PC-3 (cell line): ENCODE measurements at regions of chr6 and their contacts with region 1.

Region 1: GRCh38 chr6:42118162-42119001 is 24.0 kb downstream of the C6orf132 start:
- DNase-seq: peak; percentile 90
- ATAC-seq: peak; percentile 81
- H3K4me3 ChIP-seq: no peak overlapping the region
- H3K27ac ChIP-seq: peak overlapping the region; percentile 76
- H3K4me1 ChIP-seq: peaks cover 64% of the 10 kb centered on the region
- H3K27me3 ChIP-seq: no peaks in the 10 kb centered on the region
- CTCF ChIP-seq: no peak

Region 2: DNA sequence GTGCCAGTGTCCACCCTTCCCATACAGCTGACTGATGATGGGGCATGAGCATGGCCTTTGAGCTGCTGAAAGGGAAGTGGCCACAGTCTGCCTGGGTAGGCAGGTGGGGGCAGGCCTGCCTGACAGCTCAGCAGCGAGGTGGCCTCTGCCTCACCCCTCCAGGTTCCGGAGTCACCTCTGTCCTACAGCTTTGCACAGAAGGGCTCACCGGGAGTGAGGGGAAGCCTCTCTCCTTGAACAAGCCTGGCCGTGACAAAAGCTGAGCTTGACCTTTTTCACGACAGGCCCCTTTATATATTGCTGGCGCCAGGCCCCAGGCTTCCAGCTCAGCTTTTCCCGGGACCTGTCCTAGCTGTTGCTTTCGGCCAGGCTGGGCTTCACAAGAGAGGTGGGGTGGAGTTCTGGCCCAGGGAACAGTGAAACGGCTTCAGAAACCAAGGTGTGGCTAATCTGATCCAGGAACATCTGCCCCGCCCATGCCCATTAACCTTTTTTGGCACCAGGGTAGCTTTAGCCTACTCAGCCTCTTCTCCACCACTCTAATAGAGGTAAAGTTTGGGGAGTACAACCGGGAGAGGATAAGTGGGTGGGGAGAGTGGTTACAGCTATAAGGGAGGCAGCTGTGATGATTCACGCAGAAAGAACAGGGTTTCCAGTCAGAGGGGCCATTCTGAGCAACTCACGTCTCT is 18.9 kb before region 1 on chr6:
- CTCF ChIA-PET with region 1: interaction called, 3 read pairs
- POLR2A ChIA-PET with region 1: interaction called, 4 read pairs
- intact Hi-C with region 1: loop called (anchors 2 kb)
- DNase-seq: peak; percentile 78
- ATAC-seq: peak; percentile 78
- H3K4me3 ChIP-seq: peak overlapping the region; percentile 18; the same call in 1 of the 2 replicates
- H3K27ac ChIP-seq: peak overlapping the region; percentile 94
- H3K4me1 ChIP-seq: peaks cover 31% of the 10 kb centered on the region
- H3K27me3 ChIP-seq: no peaks in the 10 kb centered on the region
- CTCF ChIP-seq: no peak

Region 3: DNA sequence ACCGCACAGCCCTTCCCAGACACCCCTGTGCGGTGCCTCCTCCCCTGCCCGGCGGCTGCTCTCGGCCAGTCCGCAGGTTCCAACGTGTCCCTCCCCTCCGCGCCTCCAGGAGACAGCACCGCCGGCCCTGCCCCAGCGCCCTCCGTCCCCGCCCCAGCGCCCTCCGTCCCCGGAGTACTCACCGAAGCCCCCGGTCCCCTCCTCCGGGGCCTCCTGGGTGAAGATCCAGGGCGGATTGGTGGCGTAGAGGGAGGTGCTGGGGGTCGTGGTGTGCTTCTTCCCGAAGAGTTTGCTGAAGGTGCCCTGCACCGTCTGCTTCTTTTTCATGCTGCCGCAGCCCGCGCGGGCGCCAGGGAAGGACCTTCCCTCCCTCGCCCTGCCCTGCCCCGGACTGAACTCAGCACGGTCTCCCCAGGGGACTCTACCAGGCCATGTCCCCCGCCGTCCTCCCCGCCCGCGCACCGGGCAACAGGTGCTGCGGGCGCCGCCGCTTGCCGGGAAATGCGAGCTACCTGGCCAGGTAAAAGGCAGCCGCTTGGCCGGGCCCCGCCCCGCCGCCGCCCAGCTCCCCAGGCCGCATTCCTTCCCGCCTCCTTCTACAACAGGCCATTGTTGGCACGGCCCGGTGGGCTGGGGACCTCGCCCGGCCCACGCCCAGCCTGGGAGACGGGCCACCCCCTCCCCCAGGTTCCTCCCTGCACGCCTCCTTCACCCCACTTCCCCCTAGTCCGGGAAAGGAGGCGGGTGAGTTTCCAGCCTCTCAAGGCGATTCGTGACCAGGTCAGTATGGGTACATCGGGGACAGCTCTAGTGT is 23.9 kb after region 1 on chr6 and contains the start of gene C6orf132:
- CTCF ChIA-PET with region 1: interaction called, 12 read pairs
- POLR2A ChIA-PET with region 1: interaction called, 26 read pairs
- intact Hi-C with region 1: loop called (anchors 2 kb)
- DNase-seq: peak; percentile 77
- ATAC-seq: peak; percentile 39
- H3K4me3 ChIP-seq: peak within 1 kb of the TSS; percentile 89
- H3K27ac ChIP-seq: peak within 1 kb of the TSS; percentile 87
- H3K4me1 ChIP-seq: peaks cover 56% of the 10 kb centered on the region
- H3K27me3 ChIP-seq: no peaks in the 10 kb centered on the region
- CTCF ChIP-seq: no peak
- total RNA-seq, gene C6orf132: 66.0 and 86.3 TPM in 2 replicates

Region 4: GRCh38 chr6:42154461-42155198 is 36.2 kb after region 1 on chr6:
- CTCF ChIA-PET with region 1: no interaction called
- POLR2A ChIA-PET with region 1: no interaction called
- intact Hi-C with region 1: no loop called
- DNase-seq: no peak
- ATAC-seq: no peak
- H3K4me3 ChIP-seq: no peak overlapping the region
- H3K27ac ChIP-seq: no peak overlapping the region
- H3K4me1 ChIP-seq: no peaks in the 10 kb centered on the region
- H3K27me3 ChIP-seq: no peaks in the 10 kb centered on the region
- CTCF ChIP-seq: no peak

Region 5: DNA sequence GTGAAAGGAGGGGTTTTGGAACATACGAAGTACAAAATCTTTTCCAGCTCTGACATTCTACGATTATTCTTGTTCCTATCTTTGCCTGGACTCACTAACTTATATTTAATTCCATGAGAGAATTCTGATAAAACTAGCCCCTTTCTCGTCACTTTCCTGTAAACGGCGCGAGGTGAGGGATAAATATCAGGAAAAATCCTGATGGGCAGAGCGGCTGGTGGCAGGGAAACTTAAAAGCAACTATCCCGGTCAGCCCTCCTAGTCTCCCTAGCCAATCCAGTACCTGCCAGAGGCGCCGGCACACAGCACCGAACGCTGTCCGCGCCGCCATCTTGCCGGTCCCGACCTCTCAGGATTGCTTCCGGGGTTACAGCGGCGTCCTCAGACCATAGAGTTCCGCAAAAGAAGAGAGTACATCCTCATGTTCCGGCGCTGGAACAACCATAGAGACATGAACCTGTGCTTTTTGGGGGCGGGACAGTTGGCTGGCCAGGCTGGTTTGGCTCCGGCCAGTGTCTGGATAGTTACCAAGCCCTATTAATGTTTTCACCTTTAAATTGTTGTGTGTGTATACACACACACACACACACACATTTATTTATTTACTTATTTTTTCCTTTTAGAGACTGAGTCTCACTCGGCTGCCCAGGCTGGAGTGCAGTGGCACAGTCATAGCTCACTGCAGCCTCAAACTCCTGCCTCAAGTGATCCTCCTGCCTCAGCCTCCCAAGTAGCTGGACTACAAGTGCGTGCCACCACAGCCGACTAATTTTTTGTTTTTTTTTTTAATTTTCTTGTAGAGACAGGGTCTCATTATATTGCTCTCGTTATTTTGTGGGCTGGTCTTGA is 99.4 kb after region 1 on chr6 and contains the start of gene MRPS10:
- CTCF ChIA-PET with region 1: interaction called, 11 read pairs
- POLR2A ChIA-PET with region 1: interaction called, 15 read pairs
- intact Hi-C with region 1: no loop called
- DNase-seq: peak; percentile 95
- ATAC-seq: peak; percentile 69
- H3K4me3 ChIP-seq: peak within 1 kb of the TSS; percentile 85
- H3K27ac ChIP-seq: peak within 1 kb of the TSS; percentile 77
- H3K4me1 ChIP-seq: peaks cover 74% of the 10 kb centered on the region
- H3K27me3 ChIP-seq: no peaks in the 10 kb centered on the region
- CTCF ChIP-seq: no peak
- total RNA-seq, gene MRPS10: 72.2 and 82.1 TPM in 2 replicates

Region 6: DNA sequence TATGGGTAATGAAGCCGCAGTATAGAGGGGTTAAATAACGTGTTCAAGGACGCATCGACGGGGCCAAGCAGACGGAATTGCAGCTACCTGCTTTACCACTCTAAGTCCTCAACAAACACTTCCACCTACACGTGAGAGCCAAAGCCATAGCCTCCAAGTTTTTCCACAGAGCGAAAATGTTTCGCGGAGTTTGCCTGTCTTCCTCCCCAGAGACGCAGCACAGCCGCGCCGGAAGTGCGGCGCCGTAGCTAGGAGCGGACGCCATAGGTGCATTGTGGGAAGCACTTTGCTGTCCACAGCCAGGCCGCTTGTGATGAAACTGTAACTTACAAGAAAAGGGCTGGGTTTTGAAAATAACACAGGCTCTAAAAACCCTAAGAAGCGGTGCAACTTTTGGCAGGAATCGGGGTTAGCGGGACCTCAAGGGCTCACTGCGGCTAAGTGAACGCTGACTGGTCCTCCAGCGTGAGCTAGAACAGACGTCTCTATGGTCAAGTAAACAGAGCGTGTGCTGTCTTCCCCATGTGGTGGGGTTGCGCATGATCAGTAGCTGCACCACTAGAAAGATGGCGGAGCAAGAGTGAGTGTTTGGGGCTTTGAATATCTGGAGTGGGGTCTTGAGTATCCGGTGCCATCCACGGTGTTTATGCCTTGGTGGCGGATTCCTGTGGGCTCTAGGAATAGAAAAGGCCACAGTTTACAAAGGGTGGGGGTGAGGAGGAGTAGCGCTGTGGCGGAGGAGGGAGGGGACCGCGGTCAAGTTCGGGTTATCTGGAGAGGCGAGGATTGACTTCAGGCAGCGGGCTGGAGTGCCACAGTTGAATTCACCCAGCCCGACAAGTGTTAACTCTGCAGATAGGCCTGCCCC is 761.2 kb after region 1 on chr6 and contains the start of gene RPL7L1:
- CTCF ChIA-PET with region 1: no interaction called
- POLR2A ChIA-PET with region 1: interaction called, 32 read pairs
- intact Hi-C with region 1: no loop called
- DNase-seq: peak; percentile 85
- ATAC-seq: peak; percentile 89
- H3K4me3 ChIP-seq: peak within 1 kb of the TSS; percentile 85
- H3K27ac ChIP-seq: peak within 1 kb of the TSS; percentile 76
- H3K4me1 ChIP-seq: peaks cover 4% of the 10 kb centered on the region; the same call in 1 of the 2 replicates
- H3K27me3 ChIP-seq: no peaks in the 10 kb centered on the region
- CTCF ChIP-seq: no peak
- total RNA-seq, gene RPL7L1: 87.6 and 99.5 TPM in 2 replicates